Prostate gland (tissue), 2 donors: ENCODE measurements at regions of chr10 and their contacts with region 1.

Region 1: DNA sequence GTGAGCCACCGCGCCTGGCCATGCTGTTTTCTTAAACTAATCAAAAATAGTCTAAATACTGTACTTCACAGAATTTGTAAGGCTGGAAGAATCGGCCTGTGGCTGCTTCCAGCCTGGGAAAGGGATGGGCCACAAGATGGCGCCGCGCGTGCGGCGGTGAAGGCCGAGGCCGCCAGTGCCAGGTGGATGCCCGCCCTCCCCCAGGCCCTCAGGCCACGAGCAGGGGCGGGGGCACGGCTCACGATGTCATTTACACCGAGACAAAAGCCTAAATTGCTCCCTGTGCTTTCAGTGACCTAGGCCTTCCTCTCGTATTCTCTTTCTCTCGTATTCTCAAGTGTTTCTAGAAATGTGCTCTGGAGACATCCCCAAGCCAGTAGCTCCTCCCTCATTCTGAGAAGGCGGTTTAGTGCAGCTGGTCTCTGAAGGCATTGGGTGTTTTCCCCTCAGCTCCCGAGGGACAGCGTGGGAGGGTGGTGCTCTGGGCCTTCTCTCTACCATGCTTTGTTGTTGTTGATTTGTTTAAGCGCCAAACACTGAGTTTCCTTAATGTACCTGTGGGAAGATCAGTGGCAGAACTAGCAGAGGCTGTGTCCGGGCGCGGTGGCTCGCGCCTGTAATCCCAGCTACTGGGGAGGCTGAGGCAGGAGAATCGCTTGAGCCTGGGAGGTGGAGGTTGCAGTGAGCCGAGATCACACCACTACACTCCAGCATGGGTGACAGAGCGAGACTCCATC is 68.4 kb downstream of the CDC123 start:
- DNase-seq: peak; percentile 69
- H3K4me3 ChIP-seq: peak overlapping the region in 1 of 2 donors; percentile 22
- H3K27ac ChIP-seq: peak overlapping the region in 1 of 2 donors; percentile 35
- H3K4me1 ChIP-seq: no peaks in the 10 kb centered on the region
- H3K27me3 ChIP-seq: no peaks in the 10 kb centered on the region
- CTCF ChIP-seq: peak; percentile 56 to 91 (median 86)
- POLR2A ChIP-seq: no peak

Region 2: GRCh38 chr10:12656518-12657142 is 392.3 kb after region 1 on chr10:
- intact Hi-C with region 1: loop called (anchors 5 kb)
- DNase-seq: peak; percentile 29
- H3K4me3 ChIP-seq: no peak overlapping the region
- H3K27ac ChIP-seq: no peak overlapping the region
- H3K4me1 ChIP-seq: no peaks in the 10 kb centered on the region
- H3K27me3 ChIP-seq: no peaks in the 10 kb centered on the region
- CTCF ChIP-seq: peak; percentile 43 to 89 (median 76)
- POLR2A ChIP-seq: no peak

Region 3: GRCh38 chr10:12710594-12711349 is 446.4 kb after region 1 on chr10:
- intact Hi-C with region 1: loop called (anchors 2 kb)
- DNase-seq: peak; percentile 66
- H3K4me3 ChIP-seq: no peak overlapping the region
- H3K27ac ChIP-seq: peak overlapping the region in 1 of 2 donors; percentile 7
- H3K4me1 ChIP-seq: no peaks in the 10 kb centered on the region
- H3K27me3 ChIP-seq: no peaks in the 10 kb centered on the region
- CTCF ChIP-seq: peak; percentile 68 to 85 (median 82)
- POLR2A ChIP-seq: no peak

Region 4: DNA sequence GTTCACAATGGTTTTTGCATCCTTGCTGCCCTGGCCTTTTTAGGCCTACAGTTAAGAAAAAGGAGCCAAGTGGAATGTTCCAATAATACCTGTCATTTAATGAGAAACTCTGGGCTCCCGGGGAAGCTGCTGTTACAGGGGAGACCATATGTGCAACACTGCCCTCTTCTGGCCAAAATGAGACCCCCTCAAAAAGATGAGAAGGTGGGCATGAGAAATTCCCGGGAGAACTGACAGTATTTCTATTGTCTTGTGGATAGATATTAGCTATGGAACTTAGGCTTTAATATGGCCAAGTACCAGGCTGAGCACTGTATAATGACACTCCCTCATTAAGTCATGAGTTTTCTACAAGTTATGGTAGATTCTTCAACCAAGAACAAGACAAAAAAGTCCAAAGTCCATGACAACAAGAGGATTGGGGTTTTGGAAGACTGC is 637.8 kb after region 1 on chr10:
- intact Hi-C with region 1: loop called (anchors 5 kb)
- DNase-seq: peak; percentile 65
- H3K4me3 ChIP-seq: no peak overlapping the region
- H3K27ac ChIP-seq: no peak overlapping the region
- H3K4me1 ChIP-seq: peaks cover 4% of the 10 kb centered on the region
- H3K27me3 ChIP-seq: no peaks in the 10 kb centered on the region
- CTCF ChIP-seq: peak; percentile 79 to 91 (median 82)
- POLR2A ChIP-seq: no peak

Region 5: DNA sequence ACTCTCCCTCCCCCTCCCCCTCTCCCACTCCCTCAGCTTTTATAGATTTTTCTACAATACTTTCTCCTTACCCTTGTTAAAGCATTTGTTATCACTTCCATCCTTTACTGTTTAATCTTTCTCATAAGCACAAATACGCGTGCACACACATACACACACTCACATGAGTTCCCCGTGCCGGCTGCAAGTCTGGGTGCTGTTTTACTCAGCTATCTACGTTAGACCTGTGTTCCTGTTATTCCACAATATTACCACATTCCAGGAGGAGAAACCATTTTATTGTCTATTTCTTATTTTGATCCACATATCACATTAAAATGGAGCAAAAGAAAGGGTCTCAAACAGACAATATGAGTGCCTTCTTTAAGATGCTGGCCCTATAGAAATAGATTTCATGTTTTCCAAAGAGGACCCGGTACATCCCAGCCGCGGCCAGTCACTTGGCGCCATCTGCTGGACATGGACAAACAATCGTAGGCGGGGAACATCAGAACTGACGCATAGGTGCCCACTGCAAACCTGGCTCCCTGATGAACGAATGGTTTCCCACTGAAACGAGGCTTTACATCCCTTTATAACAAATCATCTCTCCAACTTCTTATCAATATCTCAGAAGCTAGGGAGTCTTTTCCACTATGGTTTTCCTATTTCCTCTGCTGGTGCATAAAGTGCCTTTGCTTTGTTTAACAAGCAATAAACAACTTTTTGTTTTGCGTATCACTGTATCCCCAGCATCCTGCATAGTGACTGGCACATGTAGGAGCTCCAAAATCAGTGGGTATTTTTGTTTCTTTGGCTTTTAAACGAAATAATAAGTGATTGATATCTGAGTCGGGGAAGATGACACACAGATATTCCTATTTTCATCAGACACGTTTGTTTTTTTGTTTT is 810.4 kb after region 1 on chr10:
- intact Hi-C with region 1: loop called (anchors 10 kb)
- DNase-seq: peak; percentile 63
- H3K4me3 ChIP-seq: no peak overlapping the region
- H3K27ac ChIP-seq: no peak overlapping the region
- H3K4me1 ChIP-seq: no peaks in the 10 kb centered on the region
- H3K27me3 ChIP-seq: no peaks in the 10 kb centered on the region
- CTCF ChIP-seq: peak; percentile 71 to 76 (median 74)
- POLR2A ChIP-seq: no peak